Ovary (tissue), 10 donors: ENCODE measurements at regions of chr4 and their contacts with region 1.

Region 1: GRCh38 chr4:176340871-176341685 is 21.3 kb downstream of the SPCS3 start:
- DNase-seq: no peak
- H3K4me3 ChIP-seq: no peak overlapping the region
- H3K27ac ChIP-seq: no peak overlapping the region
- H3K4me1 ChIP-seq: peaks cover 1% of the 10 kb centered on the region
- H3K27me3 ChIP-seq: no peaks in the 10 kb centered on the region
- CTCF ChIP-seq: no peak
- EP300 ChIP-seq: no peak
- POLR2A ChIP-seq: no peak

Region 2: GRCh38 chr4:176034499-176034898 is 306.6 kb before region 1 on chr4:
- intact Hi-C with region 1: loop called in 2 of 4 experiments (anchors 5 kb)
- DNase-seq: no peak
- H3K4me3 ChIP-seq: no peak overlapping the region
- H3K27ac ChIP-seq: no peak overlapping the region
- H3K4me1 ChIP-seq: no peaks in the 10 kb centered on the region
- H3K27me3 ChIP-seq: no peaks in the 10 kb centered on the region
- CTCF ChIP-seq: peak in 2 of 3 donors; percentile 14 to 42
- EP300 ChIP-seq: no peak
- POLR2A ChIP-seq: no peak

Region 3: GRCh38 chr4:176044589-176044951 is 296.5 kb before region 1 on chr4:
- intact Hi-C with region 1: loop called in 2 of 4 experiments (anchors 5 to 10 kb)
- DNase-seq: no peak
- H3K4me3 ChIP-seq: no peak overlapping the region
- H3K27ac ChIP-seq: no peak overlapping the region
- H3K4me1 ChIP-seq: no peaks in the 10 kb centered on the region
- H3K27me3 ChIP-seq: no peaks in the 10 kb centered on the region
- CTCF ChIP-seq: no peak
- EP300 ChIP-seq: no peak
- POLR2A ChIP-seq: no peak

Region 4: GRCh38 chr4:176149680-176150355 is 191.3 kb before region 1 on chr4:
- intact Hi-C with region 1: loop called in 1 of 4 experiments (anchors 10 kb)
- DNase-seq: no peak
- H3K4me3 ChIP-seq: no peak overlapping the region
- H3K27ac ChIP-seq: no peak overlapping the region
- H3K4me1 ChIP-seq: no peaks in the 10 kb centered on the region
- H3K27me3 ChIP-seq: no peaks in the 10 kb centered on the region
- CTCF ChIP-seq: no peak
- EP300 ChIP-seq: no peak
- POLR2A ChIP-seq: no peak